ENCODE measurements at regions of chr5 and their contacts with region 1.

Region 1: GRCh38 chr5:180860887-180861822 is at the start of gene ZFP62:
- DNase-seq: peak; percentile 93
- ATAC-seq: peak; percentile 88
- H3K4me3 Mint-ChIP-seq: peak within 1 kb of the TSS; percentile 93
- H3K27ac Mint-ChIP-seq: peak within 1 kb of the TSS; percentile 93
- H3K4me1 Mint-ChIP-seq: peaks cover 18% of the 10 kb centered on the region
- H3K27me3 Mint-ChIP-seq: peaks cover 1% of the 10 kb centered on the region
- total RNA-seq, gene ZFP62: 30.3 to 31.8 TPM

Region 2: DNA sequence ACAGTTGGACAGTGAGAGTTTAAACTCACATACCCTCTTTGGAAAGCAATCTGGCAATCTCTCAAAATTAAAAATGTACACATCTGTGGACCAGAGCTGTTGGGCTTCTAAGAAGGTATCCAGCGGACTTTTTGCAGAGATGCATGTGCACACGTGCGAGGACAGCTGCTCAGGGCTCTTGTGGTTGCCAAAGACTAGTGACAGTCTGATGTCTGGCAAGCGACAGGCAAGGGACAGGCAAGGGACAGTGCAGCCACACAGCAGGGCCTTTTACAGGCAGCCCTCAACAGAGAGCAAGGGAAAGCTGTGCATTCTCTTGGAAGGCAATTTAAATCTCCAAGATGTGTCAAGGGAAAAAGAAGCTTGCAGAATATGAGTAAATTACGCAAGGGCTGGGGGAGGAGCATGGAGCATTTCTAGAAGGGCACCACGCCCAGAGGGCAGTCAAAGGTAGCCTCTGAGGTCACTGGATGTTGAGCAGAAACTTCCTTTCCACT is 517.3 kb before region 1 on chr5:
- CTCF ChIA-PET with region 1: no interaction called
- POLR2A ChIA-PET with region 1: no interaction called
- intact Hi-C with region 1: no loop called
- DNase-seq: no peak
- ATAC-seq: no peak
- H3K4me3 Mint-ChIP-seq: no peak overlapping the region
- H3K27ac Mint-ChIP-seq: no peak overlapping the region
- H3K4me1 Mint-ChIP-seq: no peaks in the 10 kb centered on the region
- H3K27me3 Mint-ChIP-seq: peaks cover 12% of the 10 kb centered on the region

Region 3: GRCh38 chr5:180784497-180785097 is 76.6 kb before region 1 on chr5:
- CTCF ChIA-PET with region 1: no interaction called
- POLR2A ChIA-PET with region 1: no interaction called
- intact Hi-C with region 1: loop called in 1 of 2 experiments (anchors 2 kb)
- DNase-seq: peak; percentile 86
- ATAC-seq: peak; percentile 74
- H3K4me3 Mint-ChIP-seq: no peak overlapping the region
- H3K27ac Mint-ChIP-seq: no peak overlapping the region
- H3K4me1 Mint-ChIP-seq: peaks cover 22% of the 10 kb centered on the region
- H3K27me3 Mint-ChIP-seq: no peaks in the 10 kb centered on the region

Region 4: DNA sequence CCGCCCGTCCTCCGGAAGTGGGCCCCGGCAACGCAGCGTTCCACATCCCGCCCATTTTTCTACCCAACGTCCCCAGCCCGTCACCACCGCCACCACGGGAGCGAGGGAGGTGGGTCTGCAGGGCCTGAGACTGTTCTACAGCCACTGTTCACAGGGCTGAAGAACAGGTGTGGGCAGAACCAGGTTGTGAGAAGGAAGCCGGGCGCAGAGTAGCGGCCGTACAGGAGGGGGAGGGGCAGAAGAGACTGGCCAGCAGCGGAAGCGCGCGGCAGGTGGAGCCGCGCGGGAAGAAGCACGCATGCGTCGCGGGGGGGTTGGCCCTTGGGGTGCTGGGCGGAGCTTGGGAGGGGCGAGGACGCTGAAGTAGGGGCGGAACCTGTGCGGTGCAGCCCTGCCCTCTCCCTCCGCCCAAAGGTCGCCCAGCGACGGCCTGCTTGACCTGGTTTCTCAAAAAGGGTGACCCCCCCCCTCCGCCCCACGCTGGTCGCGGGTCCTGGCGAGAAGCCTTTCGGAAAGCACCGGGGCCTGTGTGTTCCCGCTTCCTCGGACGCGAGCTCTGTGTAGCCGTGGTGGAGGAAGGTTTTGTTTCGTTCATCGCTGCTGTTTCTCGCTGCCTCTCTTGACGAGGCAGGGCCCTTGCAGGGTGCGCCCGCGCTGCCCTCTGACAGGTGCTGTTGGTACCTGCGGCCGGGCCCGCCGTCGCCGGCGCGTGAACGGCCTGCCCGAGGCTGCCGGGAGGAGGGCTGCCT is 50.8 kb before region 1 on chr5:
- CTCF ChIA-PET with region 1: interaction called, 3 read pairs
- POLR2A ChIA-PET with region 1: interaction called, 4 read pairs
- intact Hi-C with region 1: loop called (anchors 1 to 2 kb)
- DNase-seq: peak; percentile 98
- ATAC-seq: peak; percentile 79
- H3K4me3 Mint-ChIP-seq: peak overlapping the region; percentile 91
- H3K27ac Mint-ChIP-seq: peak overlapping the region; percentile 97
- H3K4me1 Mint-ChIP-seq: peaks cover 72% of the 10 kb centered on the region
- H3K27me3 Mint-ChIP-seq: no peaks in the 10 kb centered on the region

Region 5: GRCh38 chr5:181052672-181053487 is 191.7 kb after region 1 on chr5:
- CTCF ChIA-PET with region 1: no interaction called
- POLR2A ChIA-PET with region 1: no interaction called
- intact Hi-C with region 1: loop called in 1 of 2 experiments (anchors 5 kb)
- DNase-seq: peak; percentile 45
- ATAC-seq: peak; percentile 36
- H3K4me3 Mint-ChIP-seq: peak overlapping the region; percentile 55
- H3K27ac Mint-ChIP-seq: no peak overlapping the region
- H3K4me1 Mint-ChIP-seq: peaks cover 11% of the 10 kb centered on the region
- H3K27me3 Mint-ChIP-seq: peaks cover 73% of the 10 kb centered on the region

Region 6: GRCh38 chr5:181159286-181159829 is 298.2 kb after region 1 on chr5:
- CTCF ChIA-PET with region 1: no interaction called
- POLR2A ChIA-PET with region 1: no interaction called
- intact Hi-C with region 1: loop called (anchors 2 to 5 kb)
- DNase-seq: peak; percentile 96
- ATAC-seq: peak; percentile 76
- H3K4me3 Mint-ChIP-seq: peak overlapping the region; percentile 18
- H3K27ac Mint-ChIP-seq: peak overlapping the region; percentile 88
- H3K4me1 Mint-ChIP-seq: peaks cover 42% of the 10 kb centered on the region
- H3K27me3 Mint-ChIP-seq: peaks cover 3% of the 10 kb centered on the region

Region 7: DNA sequence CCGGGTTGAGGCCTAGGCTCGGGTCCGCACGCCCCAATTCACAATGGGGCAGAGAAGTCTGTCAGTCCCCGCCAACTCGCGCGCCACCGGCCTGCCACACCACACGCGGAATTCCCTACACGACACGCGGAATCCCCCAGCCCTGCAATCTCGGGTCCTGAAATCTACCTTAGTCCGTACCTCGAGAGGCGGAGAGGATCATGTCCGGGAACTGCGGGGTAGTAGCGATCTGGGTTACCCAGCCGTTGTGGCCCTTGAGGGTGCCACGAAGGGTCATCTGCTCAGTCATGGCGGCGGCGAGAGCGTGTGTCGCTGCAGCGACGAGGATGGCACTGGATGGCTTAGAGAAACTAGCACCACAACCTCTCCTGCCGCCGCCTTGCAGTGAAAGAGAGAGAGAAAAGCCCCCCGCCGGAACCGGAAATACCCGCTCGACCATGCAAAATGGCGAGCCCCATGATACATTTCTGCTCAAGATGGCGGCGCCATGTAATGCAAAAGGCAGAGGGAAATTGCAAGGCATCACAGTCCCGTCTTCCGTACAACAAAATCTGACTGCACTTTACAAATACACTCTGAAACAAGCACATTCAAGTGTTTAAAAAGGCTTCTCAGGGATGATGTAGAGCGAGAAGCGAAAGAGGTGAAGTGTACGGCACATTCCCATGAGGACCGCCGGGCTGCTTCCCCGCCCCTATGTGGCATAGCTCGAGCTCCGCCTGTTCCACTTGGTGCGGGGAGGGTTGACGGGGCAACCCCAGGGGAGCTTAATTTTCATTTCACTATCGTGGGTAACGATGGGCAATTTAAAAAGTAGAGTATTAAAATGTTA is 382.6 kb after region 1 on chr5 and contains the start of gene RACK1:
- CTCF ChIA-PET with region 1: no interaction called
- POLR2A ChIA-PET with region 1: no interaction called
- intact Hi-C with region 1: loop called in 1 of 2 experiments (anchors 5 kb)
- DNase-seq: peak; percentile 94
- ATAC-seq: peak; percentile 70
- H3K4me3 Mint-ChIP-seq: peak within 1 kb of the TSS; percentile 91
- H3K27ac Mint-ChIP-seq: peak within 1 kb of the TSS; percentile 99
- H3K4me1 Mint-ChIP-seq: peaks cover 50% of the 10 kb centered on the region
- H3K27me3 Mint-ChIP-seq: no peaks in the 10 kb centered on the region
- total RNA-seq, gene RACK1: 2,724 to 3,901 TPM